ENCODE measurements at regions of chr10 and their contacts with region 1.

Region 1: DNA sequence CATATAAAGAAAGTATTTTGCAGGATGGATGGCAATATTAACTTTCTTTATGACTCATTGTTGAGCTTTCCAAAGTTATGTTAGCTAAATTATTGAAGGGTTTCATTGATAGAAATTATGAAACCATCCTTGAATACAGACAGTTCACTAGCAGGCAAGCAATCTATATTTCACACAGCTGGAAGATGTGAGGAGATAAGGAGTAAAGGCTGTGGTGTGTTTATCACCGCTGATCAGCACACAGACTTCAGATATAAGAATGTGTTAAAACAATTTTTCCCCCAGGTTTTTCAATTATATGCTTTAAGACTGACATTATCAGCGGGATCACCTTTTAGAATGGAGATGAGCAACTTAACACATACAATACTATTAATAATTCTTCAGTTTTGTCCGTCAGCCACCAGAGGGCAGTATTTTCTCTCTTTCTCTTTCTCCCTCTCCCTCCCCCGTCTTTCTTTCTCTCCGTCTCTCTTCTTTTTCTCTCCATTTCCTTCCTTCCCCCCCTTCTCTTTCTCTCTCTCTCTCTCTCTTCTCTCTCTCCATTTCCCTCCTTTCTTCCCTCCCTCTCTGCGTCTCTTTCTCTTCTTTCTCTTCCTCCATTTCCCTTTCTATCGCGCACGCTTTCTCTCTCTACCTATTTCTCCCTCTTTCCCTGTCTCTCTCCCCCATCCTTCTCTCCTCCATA is 62.9 kb upstream of the FAM171A1 start:
- DNase-seq: peak; percentile 40 to 50
- ATAC-seq: peak; percentile 85 to 88
- H3K4me3 ChIP-seq: peak overlapping the region; percentile 33; the same call in 2 of the 3 replicates
- H3K27ac ChIP-seq: peak overlapping the region in 1 of 2 experiments; percentile 42; a peak in 1 of 6 replicates
- H3K4me1 ChIP-seq: peaks cover 3% of the 10 kb centered on the region; the same call in 1 of the 3 replicates
- CTCF ChIP-seq: peak; percentile 88
- EP300 ChIP-seq: no peak
- POLR2A ChIP-seq: no peak
- RAD21 ChIP-seq: peak; percentile 75 to 79

Region 2: DNA sequence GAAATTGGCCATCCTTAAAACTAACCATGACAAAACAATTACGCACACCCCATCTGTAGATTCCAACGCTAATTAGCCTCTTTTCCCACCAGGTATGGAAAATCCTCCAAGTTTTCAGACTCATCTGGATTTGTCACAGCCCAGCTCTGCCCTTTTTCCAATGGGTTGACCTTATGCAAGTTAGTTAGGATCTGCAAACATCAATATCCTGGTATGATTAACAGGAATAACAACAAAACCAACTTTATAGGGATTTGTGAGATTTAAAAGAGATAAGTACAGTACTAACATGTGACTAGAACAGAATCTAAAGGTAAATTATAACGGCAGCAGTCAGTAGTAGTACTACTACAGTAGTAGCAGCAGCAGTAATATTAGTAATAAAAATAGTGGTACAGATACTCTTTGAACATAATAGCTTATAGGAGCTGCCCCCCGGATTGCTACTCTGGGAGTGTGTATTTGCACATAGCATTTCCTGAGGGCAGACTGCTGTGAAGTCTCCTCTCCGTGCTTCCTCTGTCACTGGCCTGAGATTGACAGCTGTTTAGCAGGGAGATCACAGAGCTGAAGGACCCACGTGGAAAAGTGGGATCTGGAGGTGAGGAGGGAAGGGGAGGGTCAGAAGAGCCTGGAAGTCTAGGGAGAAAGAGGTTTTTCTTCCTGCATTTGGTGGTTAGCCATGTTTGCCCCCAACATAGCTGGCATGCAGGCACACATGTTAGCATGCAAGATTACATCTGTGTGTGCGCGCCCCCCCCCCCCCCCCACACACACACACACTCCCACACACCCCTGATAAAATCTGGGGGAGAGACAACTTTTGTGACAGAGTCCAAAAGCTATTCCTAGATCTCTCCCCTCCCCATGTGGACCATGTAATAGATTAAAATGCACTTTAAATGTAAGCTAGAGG is 10.4 kb after region 1 on chr10:
- CTCF ChIA-PET with region 1: interaction called, 10 read pairs
- POLR2A ChIA-PET with region 1: no interaction called
- DNase-seq: no peak
- ATAC-seq: no peak
- H3K4me3 ChIP-seq: no peak overlapping the region
- H3K27ac ChIP-seq: no peak overlapping the region
- H3K4me1 ChIP-seq: no peaks in the 10 kb centered on the region
- CTCF ChIP-seq: no peak
- EP300 ChIP-seq: no peak
- POLR2A ChIP-seq: no peak
- RAD21 ChIP-seq: no peak

Region 3: DNA sequence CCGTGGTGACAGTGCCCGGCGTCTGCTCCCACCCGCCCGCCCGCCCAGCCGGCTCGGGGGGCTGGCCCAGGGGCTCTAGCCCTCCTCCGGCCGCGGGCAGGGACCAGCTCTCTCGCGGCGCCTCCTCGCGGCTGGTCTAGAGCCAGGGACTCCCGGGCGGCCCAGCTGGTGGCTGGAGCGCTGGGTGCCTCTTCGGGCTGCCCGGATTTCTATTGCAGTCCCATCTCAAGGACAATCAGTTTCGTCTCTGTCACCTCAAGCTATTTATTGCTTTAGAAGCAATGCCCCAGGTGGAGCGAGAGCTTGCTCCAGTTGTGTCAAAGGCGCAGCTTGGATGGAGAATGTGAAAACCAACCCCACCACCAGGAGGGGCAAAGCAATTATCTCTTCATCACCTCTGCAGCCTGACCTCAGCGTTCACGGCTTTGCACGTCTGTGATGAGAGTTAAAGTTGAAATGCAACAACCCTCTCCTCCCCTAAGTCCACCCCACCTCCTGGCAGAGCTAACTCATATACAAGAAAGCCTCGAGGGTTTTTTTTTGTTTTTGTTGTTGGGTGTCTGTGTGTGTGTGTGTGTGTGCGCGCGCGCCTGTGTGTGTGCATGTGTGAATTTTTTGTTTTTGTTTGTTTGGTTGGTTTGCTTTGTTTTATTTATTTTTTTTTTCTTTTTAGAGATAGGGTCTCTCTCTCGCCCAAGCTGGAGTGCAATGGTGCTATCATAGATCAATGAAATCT is 286.1 kb after region 1 on chr10 and contains the start of gene ITGA8:
- CTCF ChIA-PET with region 1: interaction called, 16 read pairs
- POLR2A ChIA-PET with region 1: no interaction called
- DNase-seq: peak; percentile 20 to 33
- ATAC-seq: peak; percentile 42 to 74; a peak in 3 of 6 replicates
- H3K4me3 ChIP-seq: peak within 1 kb of the TSS; percentile 24; the same call in 1 of the 3 replicates
- H3K27ac ChIP-seq: no peak within 1 kb of the TSS
- H3K4me1 ChIP-seq: peaks cover 5% of the 10 kb centered on the region; the same call in 1 of the 3 replicates
- CTCF ChIP-seq: no peak
- EP300 ChIP-seq: no peak
- POLR2A ChIP-seq: no peak
- RAD21 ChIP-seq: no peak
- polyA plus RNA-seq, gene ITGA8: 0.12 TPM in 1 of 2 replicates, not detected in the other

Region 4: DNA sequence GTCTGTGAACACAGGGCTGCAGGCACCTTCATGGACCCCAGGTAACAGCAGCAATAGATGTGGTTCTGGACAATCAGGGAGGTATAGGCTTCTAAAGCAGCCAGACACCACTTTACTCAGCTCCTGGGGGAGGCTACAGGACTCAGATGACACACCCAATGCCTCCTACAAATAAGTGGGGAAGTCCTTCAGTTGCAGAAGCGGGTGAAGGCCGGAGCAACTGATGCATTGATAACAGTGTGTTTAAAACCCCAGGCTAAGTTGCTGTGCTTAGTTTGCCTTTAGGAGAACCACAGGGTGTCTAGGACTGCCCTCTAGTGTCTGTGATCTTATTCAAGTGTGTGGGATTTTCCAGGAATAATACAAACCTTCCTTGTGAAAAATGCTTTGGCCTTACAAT is 291.6 kb after region 1 on chr10:
- CTCF ChIA-PET with region 1: interaction called, 16 read pairs
- POLR2A ChIA-PET with region 1: no interaction called
- DNase-seq: peak; percentile 44 to 53
- ATAC-seq: peak; percentile 88 to 89
- H3K4me3 ChIP-seq: no peak overlapping the region
- H3K27ac ChIP-seq: no peak overlapping the region
- H3K4me1 ChIP-seq: no peaks in the 10 kb centered on the region
- CTCF ChIP-seq: peak; percentile 71
- EP300 ChIP-seq: no peak
- POLR2A ChIP-seq: no peak
- RAD21 ChIP-seq: peak; percentile 70 to 71